ENCODE measurements at regions of chr16 and their contacts with region 1.

Region 1: DNA sequence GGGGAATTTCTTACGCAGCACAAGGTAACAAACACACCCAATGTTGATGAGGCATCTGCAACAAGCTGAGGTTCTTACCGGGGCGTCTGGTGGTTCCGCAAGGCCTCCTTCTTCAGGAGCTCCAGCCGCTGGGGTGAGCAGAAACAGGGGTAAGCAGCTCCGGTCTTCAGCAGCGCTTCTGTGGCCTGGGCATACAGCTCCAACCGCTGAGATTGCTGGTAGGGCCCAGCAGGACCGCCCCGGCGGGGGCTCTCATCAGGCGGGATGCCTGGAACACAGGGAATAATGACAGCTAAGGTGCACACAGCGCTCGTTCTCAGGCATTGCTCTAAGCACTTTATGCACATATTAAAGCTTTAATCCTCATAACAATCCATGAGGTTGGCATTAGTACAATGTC is 12.7 kb downstream of the EARS2 start:
- DNase-seq: no peak
- H3K4me3 ChIP-seq: no peak overlapping the region
- H3K27ac ChIP-seq: no peak overlapping the region
- H3K4me1 ChIP-seq: 0 out of 4 replicates have a peak, but pooled peaks cover 0 to 4% of the 10 kb centered on the region in 2 experiments
- H3K27me3 ChIP-seq: no peaks in the 10 kb centered on the region
- CTCF ChIP-seq: no peak
- EP300 ChIP-seq: no peak
- RAD21 ChIP-seq: no peak

Region 2: DNA sequence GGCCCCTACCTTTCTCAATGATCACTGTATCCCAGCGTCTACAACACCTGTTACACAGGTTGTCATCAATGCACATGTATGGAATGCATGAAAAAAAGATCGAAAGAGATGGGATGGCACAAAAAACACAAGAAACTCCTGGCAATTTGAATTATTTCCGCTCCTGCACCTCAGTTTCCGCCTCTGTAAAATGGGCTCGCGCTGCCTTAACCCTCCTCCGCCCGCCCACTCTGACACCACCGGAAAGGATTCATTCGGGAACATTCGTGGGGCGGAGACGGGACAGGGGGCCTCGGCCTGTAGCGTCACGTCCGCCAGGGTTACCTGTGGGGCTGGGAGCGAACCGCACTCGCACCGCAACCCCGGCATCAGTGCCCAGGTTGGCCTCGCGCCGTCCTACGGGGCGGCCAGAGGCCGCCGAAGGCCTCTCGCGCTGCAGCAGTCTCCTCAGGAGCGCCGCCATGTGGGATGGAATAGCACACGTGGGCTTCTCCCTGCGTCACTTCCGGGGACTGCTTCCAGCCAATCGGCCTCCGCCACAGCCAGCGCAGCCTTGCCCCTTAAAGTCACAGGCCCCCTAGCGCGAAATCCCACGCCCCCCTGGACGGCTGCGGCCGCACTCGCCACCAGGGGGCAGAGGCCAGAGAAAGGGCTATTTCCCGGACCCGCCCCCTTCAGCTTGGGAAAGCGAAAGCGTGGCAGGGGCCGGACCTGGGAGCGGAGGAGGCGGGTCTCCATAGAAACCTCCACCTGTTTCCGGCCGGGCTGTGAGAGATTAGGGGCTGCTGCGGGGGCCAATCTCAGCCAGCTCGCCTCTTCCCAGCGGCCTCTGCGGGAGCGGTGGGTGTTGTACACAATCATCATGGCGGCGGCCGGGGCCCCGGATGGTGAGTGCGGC is 12.7 kb after region 1 on chr16 and contains the starts of genes EARS2 and UBFD1:
- CTCF ChIA-PET with region 1: interaction called, 21 read pairs
- POLR2A ChIA-PET with region 1: interaction called, 7 read pairs
- DNase-seq: peak; percentile 96
- H3K4me3 ChIP-seq: peak within 1 kb of the TSS; percentile 89 to 98
- H3K27ac ChIP-seq: peak within 1 kb of the TSS; percentile 87 to 93
- H3K4me1 ChIP-seq: peaks cover 12 to 17% of the 10 kb centered on the region in 2 experiments
- H3K27me3 ChIP-seq: no peaks in the 10 kb centered on the region
- CTCF ChIP-seq: peak; percentile 88
- EP300 ChIP-seq: peak; percentile 6 to 28; a peak in 2 of 4 replicates
- RAD21 ChIP-seq: peak; percentile 28; the same call in 1 of the 2 replicates
- polyA plus RNA-seq, gene EARS2: 23.2 and 37.4 TPM in 2 replicates
- polyA plus RNA-seq, gene UBFD1: 66.1 and 68.9 TPM in 2 replicates